Heart left ventricle (tissue), 16 donors: ENCODE measurements at regions of chr1 and their contacts with region 1.

Region 1: GRCh38 chr1:165928075-165928731 is 100.8 kb downstream of the UCK2 start:
- DNase-seq: peak in 1 of 5 donors; percentile 38
- ATAC-seq: peak in 2 of 4 donors; percentile 11 to 47
- H3K4me3 ChIP-seq: no peak overlapping the region
- H3K27ac ChIP-seq: no peak overlapping the region
- H3K4me1 ChIP-seq: no peaks in the 10 kb centered on the region
- H3K27me3 ChIP-seq: peaks cover 0 to 4% (median 0%) of the 10 kb centered on the region in 9 donors
- CTCF ChIP-seq: peak; percentile 39 to 74 (median 62)
- POLR2A ChIP-seq: no peak

Region 2: GRCh38 chr1:166432655-166433054 is 504.5 kb after region 1 on chr1:
- intact Hi-C with region 1: loop called (anchors 1 to 5 kb)
- DNase-seq: no peak
- ATAC-seq: no peak
- H3K4me3 ChIP-seq: no peak overlapping the region
- H3K27ac ChIP-seq: no peak overlapping the region
- H3K4me1 ChIP-seq: no peaks in the 10 kb centered on the region
- H3K27me3 ChIP-seq: peaks cover 0 to 9% (median 0%) of the 10 kb centered on the region in 9 donors
- CTCF ChIP-seq: no peak
- POLR2A ChIP-seq: no peak

Region 3: DNA sequence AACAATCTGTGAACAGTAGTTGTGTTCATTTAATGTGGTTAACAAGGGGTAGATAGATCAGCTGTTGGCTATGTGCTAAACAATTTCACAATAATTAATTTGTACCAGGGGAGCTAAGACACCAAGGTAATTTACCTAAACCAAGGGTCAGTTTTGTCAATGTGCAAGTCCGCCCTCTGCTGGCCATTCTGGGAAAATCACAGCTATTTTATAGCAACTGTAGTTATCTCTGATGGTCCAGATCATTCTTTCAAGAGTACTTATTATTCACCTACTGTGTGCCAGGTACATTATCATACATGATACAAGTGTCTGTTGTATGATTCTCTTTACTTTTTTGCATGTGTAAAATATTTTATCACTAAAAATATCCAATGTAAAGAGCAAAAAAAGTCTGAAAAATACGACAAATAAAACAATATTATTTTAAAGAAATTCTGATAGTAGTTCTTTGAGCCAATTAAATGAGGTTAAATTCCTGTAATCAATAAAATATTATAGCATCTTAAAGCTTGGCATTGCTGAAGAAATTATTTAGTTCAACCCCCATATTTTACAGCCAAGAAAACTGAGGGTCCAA is 550.9 kb after region 1 on chr1:
- intact Hi-C with region 1: loop called (anchors 2 to 10 kb)
- DNase-seq: peak in 3 of 5 donors; percentile 25 to 38 (median 28)
- ATAC-seq: no peak
- H3K4me3 ChIP-seq: no peak overlapping the region
- H3K27ac ChIP-seq: no peak overlapping the region
- H3K4me1 ChIP-seq: no peaks in the 10 kb centered on the region
- H3K27me3 ChIP-seq: peaks cover 0 to 2% (median 0%) of the 10 kb centered on the region in 9 donors
- CTCF ChIP-seq: peak; percentile 67 to 90 (median 80)
- POLR2A ChIP-seq: no peak